Panc1 (cell line): ENCODE measurements at regions of chr6 and their contacts with region 1.

Region 1: DNA sequence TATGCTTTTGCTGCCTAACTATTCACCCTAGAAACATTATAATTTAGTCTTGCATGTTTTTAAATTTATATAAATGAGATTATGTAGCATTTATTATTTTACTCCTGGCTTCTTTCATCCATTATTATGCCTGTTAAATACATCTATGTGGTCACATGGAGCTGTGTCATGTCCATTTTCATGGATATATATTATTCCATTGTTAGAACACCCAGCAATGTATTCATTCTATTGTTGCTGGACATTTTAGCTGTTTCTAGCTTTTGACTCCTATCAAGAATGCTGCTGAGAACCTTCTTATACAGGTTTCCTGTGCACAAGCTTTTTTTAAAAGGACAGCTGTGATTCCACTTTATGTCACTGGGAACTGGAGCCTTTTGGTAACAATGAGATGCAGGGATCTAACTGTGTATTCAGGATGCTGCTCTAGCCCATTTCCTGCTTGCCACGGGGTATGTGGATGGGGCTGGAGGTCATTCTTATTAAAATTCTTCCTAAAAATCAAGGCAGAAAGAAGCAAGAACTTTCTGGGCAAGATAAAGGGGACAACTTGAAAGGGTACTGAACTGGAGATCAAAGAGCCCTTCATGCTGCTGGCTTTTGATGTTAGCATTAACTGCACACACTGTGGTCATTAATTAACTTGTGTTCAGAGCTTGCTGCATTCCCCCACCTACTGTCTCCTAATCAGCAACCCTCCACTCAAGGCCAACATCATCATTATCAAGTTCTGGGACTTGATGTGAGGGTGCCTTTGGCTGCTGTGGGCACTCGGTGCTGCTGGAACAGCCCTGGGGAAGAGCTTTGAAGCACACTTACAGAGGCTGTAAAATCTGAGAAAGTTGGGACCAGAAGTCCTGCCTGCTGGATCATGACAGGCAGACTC is 96.6 kb upstream of the AKIRIN2 start:
- DNase-seq: no peak
- ATAC-seq: no peak
- H3K4me3 ChIP-seq: no peak overlapping the region
- H3K27ac ChIP-seq: no peak overlapping the region
- H3K4me1 ChIP-seq: no peaks in the 10 kb centered on the region
- H3K27me3 ChIP-seq: no peaks in the 10 kb centered on the region
- CTCF ChIP-seq: no peak

Region 2: GRCh38 chr6:87684895-87685654 is 113.6 kb before region 1 on chr6:
- CTCF ChIA-PET with region 1: no interaction called
- POLR2A ChIA-PET with region 1: interaction called, 13 read pairs
- in situ Hi-C with region 1: no loop called
- intact Hi-C with region 1: no loop called
- DNase-seq: no peak
- ATAC-seq: no peak
- H3K4me3 ChIP-seq: no peak overlapping the region
- H3K27ac ChIP-seq: no peak overlapping the region
- H3K4me1 ChIP-seq: 0 out of 2 replicates have a peak, but pooled peaks cover 4% of the 10 kb centered on the region
- H3K27me3 ChIP-seq: no peaks in the 10 kb centered on the region
- CTCF ChIP-seq: no peak

Region 3: GRCh38 chr6:88105741-88106340 is 307.2 kb after region 1 on chr6:
- CTCF ChIA-PET with region 1: no interaction called
- POLR2A ChIA-PET with region 1: no interaction called
- in situ Hi-C with region 1: no loop called
- intact Hi-C with region 1: no loop called
- DNase-seq: no peak
- ATAC-seq: no peak
- H3K4me3 ChIP-seq: no peak overlapping the region
- H3K27ac ChIP-seq: no peak overlapping the region
- H3K4me1 ChIP-seq: no peaks in the 10 kb centered on the region
- H3K27me3 ChIP-seq: no peaks in the 10 kb centered on the region; the same call in 1 of the 2 replicates
- CTCF ChIP-seq: no peak